ENCODE measurements at regions of chr5 and their contacts with region 1.

Region 1: GRCh38 chr5:157253547-157253946 is 12.4 kb upstream of the CYFIP2 start:
- DNase-seq: no peak
- ATAC-seq: no peak
- H3K4me3 Mint-ChIP-seq: peak overlapping the region; percentile 54
- H3K27ac Mint-ChIP-seq: peak overlapping the region; percentile 94
- H3K4me1 Mint-ChIP-seq: peaks cover 95% of the 10 kb centered on the region
- H3K27me3 Mint-ChIP-seq: no peaks in the 10 kb centered on the region

Region 2: GRCh38 chr5:157265714-157266285 is 12.3 kb after region 1 on chr5 and contains the start of gene CYFIP2:
- CTCF ChIA-PET with region 1: interaction called, 45 read pairs
- POLR2A ChIA-PET with region 1: interaction called, 36 read pairs
- DNase-seq: peak; percentile 91
- ATAC-seq: peak; percentile 84
- H3K4me3 Mint-ChIP-seq: peak within 1 kb of the TSS; percentile 89
- H3K27ac Mint-ChIP-seq: peak within 1 kb of the TSS; percentile 99
- H3K4me1 Mint-ChIP-seq: peaks cover 62% of the 10 kb centered on the region
- H3K27me3 Mint-ChIP-seq: no peaks in the 10 kb centered on the region
- total RNA-seq, gene CYFIP2: 512 to 516 TPM

Region 3: DNA sequence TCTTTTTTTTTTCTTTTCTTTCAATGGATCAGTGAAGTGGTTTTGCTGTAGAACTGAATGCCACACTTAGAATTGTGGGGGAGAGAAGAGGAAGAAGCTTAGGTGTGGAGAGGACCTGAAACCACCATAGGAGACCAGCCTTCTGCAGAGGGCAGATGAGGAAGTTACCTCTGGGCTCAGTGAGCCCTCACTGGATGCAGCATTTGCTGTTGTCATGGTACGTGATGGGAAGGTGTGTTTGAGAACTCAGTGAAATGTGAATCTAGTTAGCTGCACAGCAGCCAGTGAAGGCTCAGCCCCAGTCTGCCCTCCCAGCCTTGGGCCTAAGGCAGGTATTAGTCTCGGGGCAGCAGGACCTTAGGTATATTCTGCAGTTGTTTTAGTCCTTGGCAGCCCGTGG is 29.9 kb after region 1 on chr5:
- CTCF ChIA-PET with region 1: interaction called, 17 read pairs
- POLR2A ChIA-PET with region 1: interaction called, 4 read pairs
- DNase-seq: peak; percentile 68
- ATAC-seq: peak; percentile 96
- H3K4me3 Mint-ChIP-seq: peak overlapping the region; percentile 1
- H3K27ac Mint-ChIP-seq: peak overlapping the region; percentile 62
- H3K4me1 Mint-ChIP-seq: peaks cover 84% of the 10 kb centered on the region
- H3K27me3 Mint-ChIP-seq: no peaks in the 10 kb centered on the region

Region 4: DNA sequence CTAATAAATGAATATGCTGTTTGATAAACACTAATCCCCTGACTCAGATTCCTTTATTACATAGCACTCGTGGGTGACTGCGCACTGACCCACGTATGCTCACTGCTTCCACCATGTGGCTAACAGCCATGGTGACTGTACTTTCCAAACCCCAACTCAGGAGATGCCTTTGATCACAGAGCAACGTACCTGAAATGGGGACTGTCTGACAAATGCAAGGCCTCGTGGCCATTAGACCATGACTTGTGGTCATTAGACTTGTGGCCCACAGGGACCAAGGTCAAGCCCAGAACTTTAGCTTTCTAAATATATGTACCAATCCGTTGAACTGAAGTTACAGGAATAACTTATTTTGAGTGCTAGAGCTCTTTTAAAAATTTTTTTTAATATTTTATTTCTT is 58.9 kb after region 1 on chr5:
- CTCF ChIA-PET with region 1: interaction called, 47 read pairs
- POLR2A ChIA-PET with region 1: no interaction called
- DNase-seq: peak; percentile 74
- ATAC-seq: peak; percentile 92
- H3K4me3 Mint-ChIP-seq: no peak overlapping the region
- H3K27ac Mint-ChIP-seq: peak overlapping the region; percentile 63
- H3K4me1 Mint-ChIP-seq: peaks cover 32% of the 10 kb centered on the region
- H3K27me3 Mint-ChIP-seq: no peaks in the 10 kb centered on the region

Region 5: DNA sequence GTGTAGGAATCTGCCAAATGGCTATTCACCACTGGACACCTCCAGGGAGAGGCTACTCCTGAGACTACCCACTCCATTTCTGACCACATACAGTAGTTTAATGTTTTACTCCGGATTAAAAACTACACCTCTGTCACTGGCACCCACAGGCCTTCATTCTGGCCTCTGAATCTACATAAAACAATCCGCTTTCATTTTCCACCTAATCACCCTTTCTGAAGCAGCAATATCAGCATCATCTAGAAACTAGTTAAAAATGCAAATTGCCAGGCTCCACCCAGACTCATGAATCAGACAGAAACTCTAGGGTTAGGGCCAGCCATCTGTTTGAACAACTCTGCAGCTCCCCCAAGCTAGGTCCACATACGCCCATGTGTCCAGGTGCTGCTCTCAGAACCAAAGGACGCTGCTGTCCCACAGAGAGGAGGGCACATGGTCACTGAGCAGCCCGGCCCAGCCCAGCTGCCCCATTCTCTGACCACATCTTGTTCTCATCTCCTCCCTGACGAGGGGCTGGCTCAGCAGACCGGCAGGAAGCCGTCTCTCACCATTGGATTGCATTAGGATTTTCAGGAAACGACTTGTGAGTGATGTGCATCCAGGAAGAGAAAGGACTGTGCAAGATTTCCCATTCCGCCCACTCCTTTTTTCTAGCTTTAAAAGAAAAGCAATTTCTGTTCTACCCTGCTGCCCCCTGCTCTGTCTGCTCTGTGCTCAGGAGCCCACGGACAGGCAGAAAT is 287.3 kb after region 1 on chr5:
- CTCF ChIA-PET with region 1: no interaction called
- POLR2A ChIA-PET with region 1: no interaction called
- DNase-seq: peak; percentile 60
- ATAC-seq: peak; percentile 67
- H3K4me3 Mint-ChIP-seq: peak overlapping the region; percentile 53
- H3K27ac Mint-ChIP-seq: peak overlapping the region; percentile 82
- H3K4me1 Mint-ChIP-seq: peaks cover 81% of the 10 kb centered on the region
- H3K27me3 Mint-ChIP-seq: no peaks in the 10 kb centered on the region

Measured in activated CD8-positive, alpha-beta T cell treated with anti-CD3 and anti-CD28 coated beads, Interleukin-2, amount 10 ng/mL, durations not matched to agents 7 days and 5 days (primary cell).